ENCODE measurements at regions of chr18 and their contacts with region 1.

Region 1: GRCh38 chr18:27845897-27846296 is 331.0 kb downstream of the CDH2 start:
- DNase-seq: no peak
- H3K4me3 ChIP-seq: no peak overlapping the region
- H3K27ac ChIP-seq: no peak overlapping the region
- H3K4me1 ChIP-seq: peaks cover 25% of the 10 kb centered on the region
- H3K27me3 ChIP-seq: no peaks in the 10 kb centered on the region
- CTCF ChIP-seq: no peak
- POLR2A ChIP-seq: no peak

Region 2: GRCh38 chr18:28204154-28204553 is 358.3 kb after region 1 on chr18:
- CTCF ChIA-PET with region 1: no interaction called
- POLR2A ChIA-PET with region 1: no interaction called
- dilution Hi-C with region 1: no loop called
- intact Hi-C with region 1: loop called (anchors 5 kb)
- DNase-seq: peak; percentile 83
- H3K4me3 ChIP-seq: no peak overlapping the region
- H3K27ac ChIP-seq: peak overlapping the region; percentile 93
- H3K4me1 ChIP-seq: peaks cover 16% of the 10 kb centered on the region
- H3K27me3 ChIP-seq: no peaks in the 10 kb centered on the region
- CTCF ChIP-seq: no peak
- POLR2A ChIP-seq: no peak

Measured in endothelial cell of umbilical vein (primary cell).